Vagina (tissue), 2 donors: ENCODE measurements at regions of chr7 and their contacts with region 1.

Region 1: DNA sequence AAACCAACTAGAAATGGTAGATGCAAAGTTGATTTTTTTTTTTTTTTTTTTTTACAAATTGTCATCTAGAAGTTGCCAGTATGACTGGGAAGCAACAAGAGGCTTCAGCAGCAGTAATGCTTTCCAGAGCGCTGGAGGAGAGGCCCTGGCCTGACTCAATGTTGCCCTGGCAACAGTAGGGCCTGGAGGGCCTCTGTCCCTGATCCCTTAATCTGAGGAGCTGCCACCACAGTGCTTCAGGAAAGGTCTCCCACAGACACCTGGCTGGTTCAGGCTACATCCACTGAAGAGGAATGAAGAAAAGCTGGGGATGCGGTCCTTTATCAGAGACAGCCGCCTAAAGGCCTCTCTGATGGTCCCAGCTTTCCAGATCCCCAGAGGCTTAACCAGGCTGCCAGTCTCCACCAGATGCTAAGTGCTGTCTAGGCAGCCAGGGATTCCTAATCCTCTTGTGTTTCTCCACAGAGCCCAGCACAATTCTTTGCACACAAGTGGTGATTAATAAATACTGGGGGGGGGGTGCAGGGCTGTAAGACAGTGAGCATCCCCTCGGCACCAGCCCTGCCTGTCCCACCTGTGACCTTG is 33.7 kb downstream of the ZNF777 start:
- DNase-seq: no peak
- H3K4me3 ChIP-seq: no peak overlapping the region
- H3K27ac ChIP-seq: no peak overlapping the region
- H3K4me1 ChIP-seq: peaks cover 6% of the 10 kb centered on the region
- H3K27me3 ChIP-seq: no peaks in the 10 kb centered on the region
- CTCF ChIP-seq: no peak
- POLR2A ChIP-seq: no peak

Region 2: GRCh38 chr7:149450821-149451220 is 23.6 kb after region 1 on chr7:
- intact Hi-C with region 1: loop called (anchors 2 kb)
- DNase-seq: peak; percentile 20 to 43
- H3K4me3 ChIP-seq: no peak overlapping the region
- H3K27ac ChIP-seq: no peak overlapping the region
- H3K4me1 ChIP-seq: no peaks in the 10 kb centered on the region
- H3K27me3 ChIP-seq: no peaks in the 10 kb centered on the region
- CTCF ChIP-seq: no peak
- POLR2A ChIP-seq: no peak